Panc1 (cell line): ENCODE measurements at regions of chr16 and their contacts with region 1.

Region 1: DNA sequence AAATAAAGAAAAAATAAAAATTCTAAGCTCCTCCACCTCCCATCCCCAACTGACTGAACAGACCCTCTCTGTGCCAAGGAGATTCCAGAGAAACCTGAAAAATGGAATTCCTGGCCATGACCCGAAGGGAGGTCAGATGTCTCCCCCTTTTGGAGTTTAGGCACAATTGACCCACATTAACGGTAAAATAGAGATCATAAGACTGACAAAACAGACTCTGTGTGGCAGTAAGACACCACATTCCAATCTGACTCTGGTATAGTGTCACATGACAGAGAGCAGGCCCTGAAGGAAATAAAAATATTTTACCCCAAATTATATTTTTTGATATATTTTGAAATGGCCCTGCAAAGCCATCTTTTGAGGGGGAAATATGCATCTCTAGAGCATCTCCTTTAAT is 115.1 kb upstream of the ZKSCAN2 start:
- DNase-seq: no peak
- ATAC-seq: no peak
- H3K4me3 ChIP-seq: no peak overlapping the region
- H3K27ac ChIP-seq: no peak overlapping the region
- H3K4me1 ChIP-seq: no peaks in the 10 kb centered on the region
- H3K27me3 ChIP-seq: no peaks in the 10 kb centered on the region
- CTCF ChIP-seq: peak; percentile 18; the same call in 1 of the 2 replicates

Region 2: DNA sequence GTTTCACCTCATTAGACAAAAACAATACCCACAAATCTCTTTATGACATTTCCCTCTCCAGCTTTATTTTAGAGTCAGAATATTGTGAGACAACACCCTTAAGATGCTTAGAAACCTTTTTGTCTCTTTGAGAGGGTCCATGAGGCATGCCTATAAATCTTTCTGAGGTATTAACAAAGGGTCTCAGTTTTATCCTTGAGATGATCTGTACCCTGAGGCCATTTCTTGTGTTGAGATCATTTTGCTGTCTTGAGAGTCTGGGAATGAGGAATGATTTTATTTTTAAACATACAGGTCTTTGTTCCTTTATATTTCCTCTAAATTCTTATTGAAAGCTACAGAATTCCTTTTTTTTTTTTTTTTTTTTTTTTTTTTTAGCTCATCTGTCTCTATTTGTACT is 139.3 kb after region 1 on chr16:
- CTCF ChIA-PET with region 1: no interaction called
- POLR2A ChIA-PET with region 1: no interaction called
- in situ Hi-C with region 1: no loop called
- intact Hi-C with region 1: no loop called
- DNase-seq: no peak
- ATAC-seq: no peak
- H3K4me3 ChIP-seq: no peak overlapping the region
- H3K27ac ChIP-seq: no peak overlapping the region
- H3K4me1 ChIP-seq: no peaks in the 10 kb centered on the region
- H3K27me3 ChIP-seq: peaks cover 4% of the 10 kb centered on the region; the same call in 1 of the 2 replicates
- CTCF ChIP-seq: no peak

Region 3: GRCh38 chr16:26019381-26020242 is 646.9 kb after region 1 on chr16:
- CTCF ChIA-PET with region 1: no interaction called
- POLR2A ChIA-PET with region 1: no interaction called
- in situ Hi-C with region 1: no loop called
- intact Hi-C with region 1: loop called (anchors 5 kb)
- DNase-seq: no peak
- ATAC-seq: no peak
- H3K4me3 ChIP-seq: no peak overlapping the region
- H3K27ac ChIP-seq: no peak overlapping the region
- H3K4me1 ChIP-seq: no peaks in the 10 kb centered on the region
- H3K27me3 ChIP-seq: no peaks in the 10 kb centered on the region
- CTCF ChIP-seq: no peak